Psoas muscle (tissue), 8 donors: ENCODE measurements at regions of chr7 and their contacts with region 1.

Region 1: DNA sequence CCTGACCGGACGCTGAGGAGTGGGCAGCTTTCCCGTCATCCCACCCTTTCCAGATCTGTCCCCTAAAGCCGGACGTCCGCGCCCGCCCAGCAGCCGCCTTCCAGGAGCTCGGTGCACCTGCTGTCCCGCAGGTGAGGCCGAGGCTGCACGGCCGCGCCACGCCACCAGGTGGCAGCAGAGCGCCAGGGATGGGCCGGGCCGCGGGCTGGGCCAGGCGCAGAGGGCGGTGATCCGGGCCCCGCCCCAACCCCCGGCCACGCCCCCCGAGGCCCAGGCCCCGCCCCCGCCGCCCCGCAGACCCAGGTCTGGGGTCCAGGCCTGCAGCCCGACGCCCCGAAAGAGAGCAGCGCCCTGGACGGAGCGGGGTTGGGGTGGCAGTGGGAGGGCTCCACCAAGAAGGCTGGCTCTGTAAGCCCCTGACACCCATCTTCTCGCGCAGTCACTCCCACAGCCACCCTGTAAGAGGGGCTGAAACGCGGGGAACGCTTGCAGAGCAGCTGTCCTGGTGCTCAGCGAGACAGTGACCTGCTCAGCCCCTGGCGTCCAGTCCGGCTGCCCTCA is 32.2 kb downstream of the FOXL3 start:
- DNase-seq: peak; percentile 72 to 85
- ATAC-seq: peak; percentile 90 to 94 (median 92)
- H3K4me3 ChIP-seq: no peak overlapping the region
- H3K27ac ChIP-seq: no peak overlapping the region
- H3K4me1 ChIP-seq: no peaks in the 10 kb centered on the region
- H3K27me3 ChIP-seq: peaks cover 0 to 21% (median 0%) of the 10 kb centered on the region in 3 donors
- CTCF ChIP-seq: peak; percentile 94

Region 2: GRCh38 chr7:584122-584465 is 261.9 kb after region 1 on chr7:
- intact Hi-C with region 1: no loop called
- DNase-seq: peak in 1 of 2 donors; percentile 54
- ATAC-seq: no peak
- H3K4me3 ChIP-seq: no peak overlapping the region
- H3K27ac ChIP-seq: no peak overlapping the region
- H3K4me1 ChIP-seq: no peaks in the 10 kb centered on the region
- H3K27me3 ChIP-seq: no peaks in the 10 kb centered on the region
- CTCF ChIP-seq: no peak

Region 3: GRCh38 chr7:636396-636795 is 314.2 kb after region 1 on chr7:
- intact Hi-C with region 1: loop called (anchors 2 to 5 kb)
- DNase-seq: no peak
- ATAC-seq: peak in 2 of 4 donors; percentile 52 to 68
- H3K4me3 ChIP-seq: no peak overlapping the region
- H3K27ac ChIP-seq: no peak overlapping the region
- H3K4me1 ChIP-seq: no peaks in the 10 kb centered on the region
- H3K27me3 ChIP-seq: no peaks in the 10 kb centered on the region
- CTCF ChIP-seq: peak; percentile 54

Region 4: GRCh38 chr7:732094-732541 is 409.9 kb after region 1 on chr7:
- intact Hi-C with region 1: loop called in 1 of 2 experiments (anchors 5 kb)
- DNase-seq: peak; percentile 52 to 61
- ATAC-seq: peak; percentile 73 to 85 (median 79)
- H3K4me3 ChIP-seq: no peak overlapping the region
- H3K27ac ChIP-seq: peak overlapping the region; percentile 87
- H3K4me1 ChIP-seq: peaks cover 32% of the 10 kb centered on the region
- H3K27me3 ChIP-seq: no peaks in the 10 kb centered on the region
- CTCF ChIP-seq: peak; percentile 40

Region 5: DNA sequence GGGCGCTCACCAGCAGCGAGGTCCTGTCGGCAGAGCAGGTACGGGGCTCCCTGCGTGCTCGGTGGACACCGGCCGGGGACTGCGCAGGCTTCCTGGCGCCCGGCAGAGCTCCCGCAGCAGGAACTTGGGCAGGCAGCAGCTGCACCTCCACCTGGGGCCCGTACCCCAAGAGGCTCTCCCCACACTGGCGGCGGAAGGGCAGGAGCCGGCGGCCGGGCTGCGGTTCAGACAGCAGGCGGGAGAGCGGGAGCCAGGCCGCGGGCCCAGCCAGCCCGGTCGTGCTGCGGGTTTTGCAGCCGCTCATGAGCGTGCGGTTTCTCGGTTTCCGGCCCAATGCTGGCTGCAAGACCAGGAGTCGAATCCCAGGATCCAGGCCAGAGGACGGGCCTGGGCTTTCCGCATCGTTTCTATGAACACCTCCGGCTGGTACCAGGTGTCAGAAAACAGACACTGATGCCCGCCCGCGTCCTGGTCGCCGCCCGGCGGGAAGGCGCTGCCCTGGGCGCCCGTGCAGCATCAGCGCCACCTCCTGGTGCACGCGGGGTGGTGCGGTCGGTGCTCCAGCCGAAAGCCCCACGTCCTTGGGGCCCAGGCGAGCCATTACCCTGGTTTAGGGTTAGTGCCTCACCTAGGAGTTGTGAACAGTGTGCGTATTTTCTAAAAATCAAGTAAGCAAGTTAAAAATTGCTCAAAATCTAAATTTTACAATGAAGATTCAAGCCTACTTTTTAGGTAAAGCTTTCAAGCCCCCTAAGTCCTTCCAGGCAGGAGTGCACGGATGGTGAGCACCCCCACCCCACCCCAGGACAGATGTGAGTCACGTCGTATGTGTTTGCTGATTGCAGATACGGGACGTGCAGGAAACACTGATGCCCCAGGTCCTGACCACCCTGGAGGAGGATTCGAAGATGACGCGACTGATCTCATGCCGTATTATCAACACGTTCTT is 452.2 kb after region 1 on chr7:
- intact Hi-C with region 1: loop called (anchors 2 kb)
- DNase-seq: peak; percentile 56 to 80
- ATAC-seq: peak; percentile 71 to 90 (median 83)
- H3K4me3 ChIP-seq: no peak overlapping the region
- H3K27ac ChIP-seq: no peak overlapping the region
- H3K4me1 ChIP-seq: peaks cover 12% of the 10 kb centered on the region
- H3K27me3 ChIP-seq: no peaks in the 10 kb centered on the region
- CTCF ChIP-seq: peak; percentile 94